Naive thymus-derived CD4-positive, alpha-beta T cell (primary cell): ENCODE measurements at regions of chr13 and their contacts with region 1.

Region 1: DNA sequence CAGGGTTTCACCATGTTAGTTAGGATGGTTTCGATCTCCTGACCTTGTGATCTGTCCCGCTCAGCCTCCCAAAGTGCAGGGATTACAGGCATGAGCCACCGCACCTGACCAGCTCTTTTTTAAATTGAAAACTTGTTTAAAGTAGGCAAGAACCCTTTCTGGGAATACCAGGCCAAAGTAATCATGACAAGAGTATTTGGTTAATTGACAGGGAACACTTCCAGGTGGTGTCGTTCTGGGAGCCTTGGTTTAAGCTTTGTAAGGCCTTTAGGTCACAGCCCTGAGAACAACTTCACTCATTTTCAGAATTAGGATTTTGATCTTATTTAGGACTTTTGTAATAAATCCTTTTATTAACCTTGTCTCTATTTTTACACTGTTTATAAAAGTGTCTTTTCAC is 115.2 kb downstream of the LMO7 start:
- DNase-seq: no peak
- ATAC-seq: no peak
- H3K4me3 ChIP-seq: no peak overlapping the region
- H3K4me3 Mint-ChIP-seq: no peak overlapping the region
- H3K27ac ChIP-seq: no peak overlapping the region
- H3K27ac Mint-ChIP-seq: no peak overlapping the region
- H3K4me1 ChIP-seq: peaks cover 0 to 9% of the 10 kb centered on the region in 2 donors
- H3K4me1 Mint-ChIP-seq: peaks cover 5 to 22% (median 13%) of the 10 kb centered on the region in 7 donors
- H3K27me3 ChIP-seq: no peaks in the 10 kb centered on the region
- H3K27me3 Mint-ChIP-seq: no peaks in the 10 kb centered on the region

Region 2: DNA sequence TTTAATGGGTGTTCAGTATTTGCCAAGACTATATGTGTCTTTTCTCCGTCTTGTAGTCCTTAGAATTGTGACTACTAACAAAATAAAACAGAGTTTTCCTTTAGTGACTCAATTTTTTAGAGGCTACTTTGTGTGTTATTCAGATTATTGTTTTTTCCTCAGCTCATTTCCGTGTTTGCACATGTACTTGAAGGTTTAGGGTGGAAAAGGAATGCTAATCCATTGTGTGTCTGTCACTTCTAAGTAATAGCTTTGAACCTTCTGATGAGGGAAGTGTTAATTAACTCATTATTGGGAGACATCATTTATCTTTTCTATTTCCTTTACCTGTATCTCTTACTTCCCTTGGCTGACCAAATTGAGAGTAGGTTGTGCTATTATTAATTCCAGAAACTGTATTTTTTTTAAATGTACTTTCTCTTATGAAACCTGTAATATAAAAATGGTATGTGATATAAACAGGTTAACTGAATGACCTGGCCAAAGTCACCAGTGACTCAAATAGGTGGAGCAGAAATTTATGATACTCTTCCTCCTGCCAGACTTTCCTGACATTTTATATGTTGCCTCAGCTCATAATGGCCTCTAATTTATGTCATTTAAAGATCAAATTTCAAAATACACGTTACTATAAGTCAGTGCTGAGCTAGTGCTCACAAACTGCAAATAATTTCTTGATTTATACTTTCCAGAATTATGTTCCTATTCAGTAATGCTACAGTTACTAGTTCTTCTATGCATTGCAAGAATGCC is 26.4 kb before region 1 on chr13:
- CTCF ChIA-PET with region 1: no interaction called
- POLR2A ChIA-PET with region 1: no interaction called
- intact Hi-C with region 1: loop called in 1 of 2 experiments (anchors 1 kb)
- DNase-seq: no peak
- ATAC-seq: no peak
- H3K4me3 ChIP-seq: no peak overlapping the region
- H3K4me3 Mint-ChIP-seq: no peak overlapping the region
- H3K27ac ChIP-seq: no peak overlapping the region
- H3K27ac Mint-ChIP-seq: peak overlapping the region in 1 of 9 donors; percentile 18
- H3K4me1 ChIP-seq: no peaks in the 10 kb centered on the region
- H3K4me1 Mint-ChIP-seq: peaks cover 0 to 4% (median 0%) of the 10 kb centered on the region in 7 donors
- H3K27me3 ChIP-seq: no peaks in the 10 kb centered on the region
- H3K27me3 Mint-ChIP-seq: peaks cover 0 to 2% (median 0%) of the 10 kb centered on the region in 5 donors